ENCODE measurements at regions of chr2 and their contacts with region 1.

Region 1: GRCh38 chr2:11863513-11864328 is 117.3 kb downstream of the LPIN1 start:
- DNase-seq: peak; percentile 51 to 78 (median 67)
- H3K4me3 ChIP-seq: peak overlapping the region in 1 of 3 experiments; percentile 39
- H3K4me3 Mint-ChIP-seq: peak overlapping the region; percentile 20 to 75
- H3K27ac ChIP-seq: no peak overlapping the region
- H3K27ac Mint-ChIP-seq: peak overlapping the region in 4 of 7 donors; percentile 16 to 64 (median 54)
- H3K4me1 ChIP-seq: peaks cover 24 to 27% of the 10 kb centered on the region in 2 donors
- H3K4me1 Mint-ChIP-seq: peaks cover 49% of the 10 kb centered on the region
- H3K27me3 ChIP-seq: peaks cover 2 to 12% of the 10 kb centered on the region in 2 donors
- H3K27me3 Mint-ChIP-seq: peaks cover 0 to 3% (median 3%) of the 10 kb centered on the region in 3 donors
- CTCF ChIP-seq: peak; percentile 95

Region 2: DNA sequence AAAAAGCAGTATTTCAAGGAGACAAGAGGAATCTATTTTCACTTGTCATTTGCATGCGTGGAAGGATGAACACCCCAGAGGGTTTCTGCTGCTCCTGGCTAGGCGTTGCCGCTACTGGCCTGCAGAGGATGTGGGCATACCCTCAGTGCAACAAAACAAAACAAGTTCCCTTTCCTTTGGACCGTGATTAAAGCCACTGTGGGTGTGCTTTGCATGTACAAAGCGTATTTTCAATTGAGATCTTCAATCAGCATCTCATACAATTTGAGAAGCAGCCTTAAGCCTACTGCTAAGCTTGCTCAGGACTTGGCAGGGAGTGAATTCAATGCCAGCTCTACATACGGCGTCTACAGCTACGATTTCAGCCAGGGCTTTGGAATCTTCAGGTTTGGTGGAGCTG is 181.1 kb after region 1 on chr2:
- intact Hi-C with region 1: loop called in 1 of 2 experiments (anchors 10 kb)
- DNase-seq: peak; percentile 24 to 26 (median 25)
- H3K4me3 ChIP-seq: peak overlapping the region in 1 of 3 experiments; percentile 46
- H3K4me3 Mint-ChIP-seq: peak overlapping the region in 1 of 2 donors; percentile 84
- H3K27ac ChIP-seq: peak overlapping the region in 1 of 2 donors; percentile 12
- H3K27ac Mint-ChIP-seq: peak overlapping the region in 5 of 7 donors; percentile 32 to 79 (median 54)
- H3K4me1 ChIP-seq: peaks cover 32 to 42% of the 10 kb centered on the region in 2 donors
- H3K4me1 Mint-ChIP-seq: peaks cover 56% of the 10 kb centered on the region
- H3K27me3 ChIP-seq: no peaks in the 10 kb centered on the region
- H3K27me3 Mint-ChIP-seq: peaks cover 0 to 7% (median 2%) of the 10 kb centered on the region in 3 donors
- CTCF ChIP-seq: no peak